CD8-positive, alpha-beta T cell (primary cell): ENCODE measurements at regions of chr4 and their contacts with region 1.

Region 1: DNA sequence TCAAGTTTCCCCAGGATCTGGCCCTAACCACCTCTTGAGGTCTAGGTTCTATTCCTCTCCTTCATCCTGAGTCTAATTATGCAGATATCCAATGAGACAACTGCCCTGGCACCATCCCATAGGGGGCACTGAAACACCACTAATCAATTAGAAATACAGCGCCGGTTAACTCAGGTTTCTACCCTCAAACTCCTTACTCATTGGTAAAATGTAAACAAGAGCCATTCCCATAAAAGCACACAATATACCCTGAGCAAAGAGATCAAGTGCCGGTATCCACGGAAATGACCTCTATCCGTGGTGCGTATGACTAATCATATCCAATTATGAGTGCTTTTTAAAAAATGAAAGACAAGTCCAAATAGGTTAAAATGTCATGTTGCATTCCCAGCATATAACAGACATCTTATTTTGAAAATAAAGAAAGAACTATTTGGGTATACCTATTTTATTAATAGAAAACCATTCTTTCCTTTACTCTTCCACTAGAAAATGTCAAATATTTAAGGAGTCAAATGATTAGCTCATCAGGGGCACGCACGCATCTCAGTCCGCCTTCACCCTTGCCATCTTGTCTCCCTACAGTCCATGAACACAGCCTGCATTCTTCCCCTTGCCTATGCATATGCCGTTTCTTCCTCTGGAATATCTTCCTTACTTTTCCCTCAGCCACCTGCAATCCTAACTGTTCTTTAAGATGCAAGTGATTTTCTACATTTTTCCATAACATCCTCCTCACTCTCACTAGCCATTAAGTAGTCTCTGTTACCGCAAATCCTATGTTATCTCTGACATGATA is 141.1 kb downstream of the MAML3 start:
- DNase-seq: peak; percentile 31 to 77 (median 59)
- ATAC-seq: peak; percentile 96
- H3K4me3 ChIP-seq: no peak overlapping the region
- H3K4me3 Mint-ChIP-seq: no peak overlapping the region
- H3K27ac ChIP-seq: no peak overlapping the region
- H3K27ac Mint-ChIP-seq: no peak overlapping the region
- H3K4me1 ChIP-seq: no peaks in the 10 kb centered on the region
- H3K4me1 Mint-ChIP-seq: peaks cover 7% of the 10 kb centered on the region
- H3K27me3 ChIP-seq: no peaks in the 10 kb centered on the region
- H3K27me3 Mint-ChIP-seq: no peaks in the 10 kb centered on the region
- CTCF ChIP-seq: peak; percentile 81

Region 2: DNA sequence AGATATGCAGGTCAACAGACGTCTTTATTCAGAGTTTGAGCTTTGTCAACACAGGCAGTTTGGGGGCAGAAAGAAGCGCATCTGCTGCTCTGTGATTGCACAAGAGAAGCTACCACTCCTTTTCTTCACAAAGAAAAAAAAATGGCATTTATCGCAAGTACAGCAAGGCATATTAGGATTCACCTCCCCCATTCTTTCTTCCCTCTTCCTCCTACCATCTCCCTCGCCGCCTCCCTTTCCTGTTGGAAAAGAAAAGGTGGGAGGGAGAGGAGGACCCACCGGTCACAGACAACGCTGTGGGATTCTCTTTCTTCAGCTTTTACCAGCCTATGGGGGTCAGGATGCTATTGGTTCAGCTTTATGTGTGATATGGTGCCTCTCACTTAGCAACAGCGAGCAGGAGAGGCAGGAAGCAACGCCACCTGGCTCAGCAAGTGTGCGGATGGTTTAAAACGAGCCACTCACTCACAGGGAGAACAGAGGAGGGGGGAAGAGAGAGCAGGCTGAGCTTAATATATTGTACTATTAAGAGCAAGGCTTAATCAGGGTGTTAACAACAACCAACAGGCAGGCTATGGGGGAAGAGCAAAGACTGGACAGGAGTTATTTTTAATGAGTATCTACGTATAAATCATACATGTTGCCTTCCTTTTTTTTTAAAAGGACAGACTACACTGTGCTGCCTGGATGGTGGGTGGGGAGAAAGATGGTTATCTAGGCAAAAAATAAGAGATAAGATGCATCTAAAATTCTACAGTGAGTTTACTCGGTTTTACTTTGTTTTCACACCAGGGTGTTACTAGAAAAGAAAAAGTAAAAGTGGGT is 36.3 kb after region 1 on chr4:
- CTCF ChIA-PET with region 1: interaction called, 3 read pairs
- POLR2A ChIA-PET with region 1: no interaction called
- intact Hi-C with region 1: loop called in 1 of 2 experiments (anchors 2 kb)
- DNase-seq: peak; percentile 8 to 80 (median 58)
- ATAC-seq: peak; percentile 95
- H3K4me3 ChIP-seq: peak overlapping the region; percentile 13 to 55
- H3K4me3 Mint-ChIP-seq: peak overlapping the region; percentile 81
- H3K27ac ChIP-seq: peak overlapping the region; percentile 31 to 55
- H3K27ac Mint-ChIP-seq: peak overlapping the region; percentile 87
- H3K4me1 ChIP-seq: peaks cover 34% of the 10 kb centered on the region
- H3K4me1 Mint-ChIP-seq: peaks cover 49% of the 10 kb centered on the region
- H3K27me3 ChIP-seq: no peaks in the 10 kb centered on the region
- H3K27me3 Mint-ChIP-seq: no peaks in the 10 kb centered on the region
- CTCF ChIP-seq: no peak

Region 3: GRCh38 chr4:140208921-140209320 is 196.0 kb after region 1 on chr4:
- CTCF ChIA-PET with region 1: no interaction called
- POLR2A ChIA-PET with region 1: no interaction called
- intact Hi-C with region 1: no loop called
- DNase-seq: no peak
- ATAC-seq: no peak
- H3K4me3 ChIP-seq: no peak overlapping the region
- H3K4me3 Mint-ChIP-seq: no peak overlapping the region
- H3K27ac ChIP-seq: no peak overlapping the region
- H3K27ac Mint-ChIP-seq: no peak overlapping the region
- H3K4me1 ChIP-seq: no peaks in the 10 kb centered on the region
- H3K4me1 Mint-ChIP-seq: no peaks in the 10 kb centered on the region
- H3K27me3 ChIP-seq: no peaks in the 10 kb centered on the region
- H3K27me3 Mint-ChIP-seq: no peaks in the 10 kb centered on the region
- CTCF ChIP-seq: no peak

Region 4: GRCh38 chr4:140243278-140243753 is 230.4 kb after region 1 on chr4:
- CTCF ChIA-PET with region 1: interaction called, 13 read pairs
- POLR2A ChIA-PET with region 1: no interaction called
- intact Hi-C with region 1: no loop called
- DNase-seq: peak in 5 of 9 experiments; percentile 18 to 54 (median 25)
- ATAC-seq: peak; percentile 61
- H3K4me3 ChIP-seq: peak overlapping the region in 1 of 2 experiments; percentile 10
- H3K4me3 Mint-ChIP-seq: peak overlapping the region; percentile 57
- H3K27ac ChIP-seq: no peak overlapping the region
- H3K27ac Mint-ChIP-seq: peak overlapping the region; percentile 82
- H3K4me1 ChIP-seq: peaks cover 19% of the 10 kb centered on the region
- H3K4me1 Mint-ChIP-seq: peaks cover 30% of the 10 kb centered on the region
- H3K27me3 ChIP-seq: no peaks in the 10 kb centered on the region
- H3K27me3 Mint-ChIP-seq: no peaks in the 10 kb centered on the region
- CTCF ChIP-seq: no peak

Region 5: GRCh38 chr4:140326395-140326993 is 313.6 kb after region 1 on chr4:
- CTCF ChIA-PET with region 1: no interaction called
- POLR2A ChIA-PET with region 1: no interaction called
- intact Hi-C with region 1: loop called in 1 of 2 experiments (anchors 1 kb)
- DNase-seq: peak in 2 of 9 experiments; percentile 10 to 23
- ATAC-seq: no peak
- H3K4me3 ChIP-seq: no peak overlapping the region
- H3K4me3 Mint-ChIP-seq: no peak overlapping the region
- H3K27ac ChIP-seq: no peak overlapping the region
- H3K27ac Mint-ChIP-seq: no peak overlapping the region
- H3K4me1 ChIP-seq: no peaks in the 10 kb centered on the region
- H3K4me1 Mint-ChIP-seq: peaks cover 3% of the 10 kb centered on the region
- H3K27me3 ChIP-seq: no peaks in the 10 kb centered on the region
- H3K27me3 Mint-ChIP-seq: peaks cover 3% of the 10 kb centered on the region
- CTCF ChIP-seq: no peak

Region 6: GRCh38 chr4:140523857-140524742 is 511.2 kb after region 1 on chr4 and contains the start of gene ELMOD2:
- CTCF ChIA-PET with region 1: no interaction called
- POLR2A ChIA-PET with region 1: no interaction called
- intact Hi-C with region 1: loop called in 1 of 2 experiments (anchors 1 kb)
- DNase-seq: peak; percentile 93 to 99 (median 97)
- ATAC-seq: peak; percentile 98
- H3K4me3 ChIP-seq: peak within 1 kb of the TSS; percentile 72 to 77
- H3K4me3 Mint-ChIP-seq: peak within 1 kb of the TSS; percentile 89
- H3K27ac ChIP-seq: peak within 1 kb of the TSS; percentile 59 to 63
- H3K27ac Mint-ChIP-seq: peak within 1 kb of the TSS; percentile 86
- H3K4me1 ChIP-seq: peaks cover 9% of the 10 kb centered on the region
- H3K4me1 Mint-ChIP-seq: peaks cover 27% of the 10 kb centered on the region
- H3K27me3 ChIP-seq: no peaks in the 10 kb centered on the region
- H3K27me3 Mint-ChIP-seq: no peaks in the 10 kb centered on the region
- CTCF ChIP-seq: peak; percentile 88
- total RNA-seq, gene ELMOD2: 7.2 to 8.8 TPM